ENCODE measurements at regions of chr6 and their contacts with region 1.

Region 1: DNA sequence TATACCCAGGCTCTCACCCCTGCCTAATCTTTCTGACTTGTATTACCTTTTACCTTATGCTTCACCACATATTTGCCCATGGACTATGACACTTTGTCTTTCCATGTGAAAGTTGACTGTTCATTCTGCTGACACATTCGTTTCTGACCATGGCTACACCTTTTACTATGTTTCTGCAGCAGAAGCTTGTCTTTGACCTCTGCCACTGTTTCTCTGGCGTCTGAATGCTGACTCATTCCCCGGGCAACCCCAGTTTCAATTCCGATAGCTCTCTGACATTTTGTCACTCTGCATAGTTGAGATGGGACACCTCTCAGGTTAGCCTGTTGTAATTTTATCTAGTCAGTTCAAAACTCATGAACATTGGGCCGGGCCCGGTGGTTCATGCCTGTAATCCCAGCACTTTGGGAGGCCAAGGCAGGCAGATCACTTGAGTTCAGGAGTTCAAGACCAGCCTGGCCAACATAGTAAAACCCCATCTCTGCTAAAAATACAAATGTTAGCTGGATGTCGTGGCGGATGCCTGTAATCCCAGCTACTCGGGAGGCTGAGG is 50.7 kb downstream of the SLC26A8 start:
- DNase-seq: peak; percentile 62 to 91
- H3K4me3 ChIP-seq: no peak overlapping the region
- H3K27ac ChIP-seq: peak overlapping the region; percentile 87
- H3K4me1 ChIP-seq: peaks cover 41% of the 10 kb centered on the region
- H3K27me3 ChIP-seq: no peaks in the 10 kb centered on the region
- CTCF ChIP-seq: no peak

Region 2: DNA sequence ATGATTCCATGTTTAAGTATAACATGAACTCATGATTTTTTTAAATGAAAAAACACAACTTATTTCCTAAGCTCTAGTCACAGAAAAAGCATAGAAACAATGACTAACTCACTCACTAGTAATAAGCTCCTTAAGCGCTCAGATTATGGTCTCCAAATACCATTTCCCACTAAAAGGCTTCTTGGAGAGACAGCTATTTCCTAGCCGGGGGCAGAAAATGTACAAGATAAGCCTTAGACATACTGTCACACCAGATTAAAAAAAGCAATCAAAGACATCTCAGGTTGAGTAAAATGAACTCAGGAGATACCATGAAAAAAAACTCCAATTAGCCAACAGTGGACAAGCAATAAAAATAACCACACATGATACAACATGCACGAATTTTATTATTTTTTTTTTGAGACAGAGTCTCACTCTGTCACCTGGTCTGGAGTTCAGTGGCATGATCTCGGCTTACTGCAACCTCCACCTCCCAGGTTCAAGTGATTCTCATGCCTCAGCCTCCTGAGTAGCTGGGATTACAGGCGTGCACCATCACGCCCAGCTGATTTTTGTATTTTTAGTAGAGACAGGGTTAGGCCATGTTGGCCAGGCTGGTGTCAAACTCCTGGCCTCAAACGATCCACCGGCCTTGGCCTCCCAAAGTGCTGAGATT is 67.8 kb before region 1 on chr6:
- CTCF ChIA-PET with region 1: interaction called, 24 read pairs
- POLR2A ChIA-PET with region 1: no interaction called
- intact Hi-C with region 1: no loop called
- DNase-seq: no peak
- H3K4me3 ChIP-seq: no peak overlapping the region
- H3K27ac ChIP-seq: no peak overlapping the region
- H3K4me1 ChIP-seq: no peaks in the 10 kb centered on the region
- H3K27me3 ChIP-seq: no peaks in the 10 kb centered on the region
- CTCF ChIP-seq: no peak

Region 3: GRCh38 chr6:35929649-35930048 is 44.1 kb before region 1 on chr6:
- CTCF ChIA-PET with region 1: no interaction called
- POLR2A ChIA-PET with region 1: interaction called, 13 read pairs
- intact Hi-C with region 1: no loop called
- DNase-seq: peak in 1 of 2 experiments; percentile 56
- H3K4me3 ChIP-seq: no peak overlapping the region
- H3K27ac ChIP-seq: no peak overlapping the region
- H3K4me1 ChIP-seq: peaks cover 14% of the 10 kb centered on the region
- H3K27me3 ChIP-seq: no peaks in the 10 kb centered on the region
- CTCF ChIP-seq: no peak

Region 4: GRCh38 chr6:35948725-35949124 is 25.0 kb before region 1 on chr6:
- CTCF ChIA-PET with region 1: no interaction called
- POLR2A ChIA-PET with region 1: no interaction called
- intact Hi-C with region 1: no loop called
- DNase-seq: no peak
- H3K4me3 ChIP-seq: no peak overlapping the region
- H3K27ac ChIP-seq: no peak overlapping the region
- H3K4me1 ChIP-seq: 0 out of 2 replicates have a peak, but pooled peaks cover 9% of the 10 kb centered on the region
- H3K27me3 ChIP-seq: no peaks in the 10 kb centered on the region
- CTCF ChIP-seq: 0 out of 2 replicates have a peak, but pooled peaks have one; percentile 20

Measured in PC-9 (cell line).